Naive thymus-derived CD4-positive, alpha-beta T cell (primary cell): ENCODE measurements at regions of chr14 and their contacts with region 1.

Region 1: DNA sequence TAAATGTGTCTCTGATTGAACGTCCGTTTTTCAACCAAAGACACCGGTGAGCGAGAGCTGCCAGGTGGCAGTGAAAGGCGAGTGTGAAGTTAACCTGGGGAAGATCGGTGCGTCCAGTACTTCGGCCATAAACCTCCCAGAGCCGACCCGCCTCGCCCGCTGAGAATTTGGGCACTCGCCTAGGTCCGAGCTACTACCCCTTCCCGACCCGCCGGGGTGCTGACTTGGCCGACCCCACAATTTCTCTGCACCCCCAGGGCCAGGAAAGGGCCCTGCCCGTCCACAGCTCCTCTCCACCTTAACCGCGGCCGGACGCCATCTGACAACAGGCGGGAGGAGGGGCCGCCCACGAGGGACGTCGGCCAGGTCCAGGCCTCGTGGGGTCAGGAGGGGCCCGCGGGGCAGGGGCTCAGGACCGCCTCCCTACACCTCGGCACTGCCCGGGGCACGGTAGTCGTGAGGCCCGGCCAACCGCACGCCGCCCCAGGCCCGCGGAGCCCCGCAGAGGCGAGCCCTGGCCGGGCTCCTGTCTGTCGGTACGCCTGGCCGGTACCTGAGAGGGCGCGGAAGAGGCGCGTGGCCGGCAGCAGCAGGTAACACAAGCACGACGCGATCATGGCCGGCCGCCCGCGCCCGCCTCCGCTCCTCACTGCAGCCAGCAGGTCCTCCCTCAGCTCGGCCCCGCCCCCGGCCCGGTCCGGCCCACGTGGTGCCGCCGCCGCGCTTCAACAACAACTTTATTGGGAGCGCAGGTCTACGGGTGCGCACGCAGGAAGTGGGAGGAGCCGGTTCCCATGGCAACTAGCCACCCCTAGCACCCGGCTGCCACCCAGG is at the start of gene ANGEL1:
- DNase-seq: peak; percentile 93 to 98 (median 96)
- ATAC-seq: peak; percentile 98
- H3K4me3 ChIP-seq: peak within 1 kb of the TSS; percentile 63
- H3K4me3 Mint-ChIP-seq: peak within 1 kb of the TSS; percentile 88 to 99 (median 93)
- H3K27ac ChIP-seq: peak within 1 kb of the TSS; percentile 87
- H3K27ac Mint-ChIP-seq: peak within 1 kb of the TSS; percentile 85 to 96 (median 94)
- H3K4me1 ChIP-seq: peaks cover 20 to 21% of the 10 kb centered on the region in 2 donors
- H3K4me1 Mint-ChIP-seq: peaks cover 16 to 48% (median 37%) of the 10 kb centered on the region in 7 donors
- H3K27me3 ChIP-seq: no peaks in the 10 kb centered on the region
- H3K27me3 Mint-ChIP-seq: no peaks in the 10 kb centered on the region
- total RNA-seq, gene ANGEL1: 14.5 to 37.6 (median 19.9) TPM

Region 2: GRCh38 chr14:75982266-75983018 is 830.0 kb before region 1 on chr14:
- CTCF ChIA-PET with region 1: interaction called, 3 read pairs
- POLR2A ChIA-PET with region 1: no interaction called
- intact Hi-C with region 1: loop called in 1 of 2 experiments (anchors 2 kb)
- DNase-seq: peak; percentile 69 to 83 (median 80)
- ATAC-seq: peak; percentile 83
- H3K4me3 ChIP-seq: peak overlapping the region; percentile 83
- H3K4me3 Mint-ChIP-seq: peak overlapping the region; percentile 80 to 99 (median 88)
- H3K27ac ChIP-seq: peak overlapping the region; percentile 84
- H3K27ac Mint-ChIP-seq: peak overlapping the region; percentile 58 to 97 (median 90)
- H3K4me1 ChIP-seq: peaks cover 18 to 32% of the 10 kb centered on the region in 2 donors
- H3K4me1 Mint-ChIP-seq: peaks cover 43 to 64% (median 56%) of the 10 kb centered on the region in 7 donors
- H3K27me3 ChIP-seq: no peaks in the 10 kb centered on the region
- H3K27me3 Mint-ChIP-seq: peaks cover 0 to 24% (median 0%) of the 10 kb centered on the region in 5 donors

Region 3: GRCh38 chr14:76761136-76761959 is 51.1 kb before region 1 on chr14 and contains the start of gene VASH1:
- CTCF ChIA-PET with region 1: no interaction called
- POLR2A ChIA-PET with region 1: no interaction called
- intact Hi-C with region 1: loop called (anchors 2 kb)
- DNase-seq: peak in 7 of 9 donors; percentile 8 to 77 (median 25)
- ATAC-seq: peak; percentile 85
- H3K4me3 ChIP-seq: peak within 1 kb of the TSS; percentile 61
- H3K4me3 Mint-ChIP-seq: peak within 1 kb of the TSS; percentile 71 to 88 (median 82)
- H3K27ac ChIP-seq: no peak within 1 kb of the TSS
- H3K27ac Mint-ChIP-seq: peak within 1 kb of the TSS in 2 of 9 donors; percentile 44 to 91
- H3K4me1 ChIP-seq: peaks cover 0 to 5% of the 10 kb centered on the region in 2 donors
- H3K4me1 Mint-ChIP-seq: peaks cover 5 to 25% (median 10%) of the 10 kb centered on the region in 7 donors
- H3K27me3 ChIP-seq: peaks cover 0 to 5% of the 10 kb centered on the region in 2 donors
- H3K27me3 Mint-ChIP-seq: peaks cover 0 to 65% (median 26%) of the 10 kb centered on the region in 5 donors
- total RNA-seq, gene VASH1: 1.1 to 18.2 (median 5.6) TPM

Region 4: DNA sequence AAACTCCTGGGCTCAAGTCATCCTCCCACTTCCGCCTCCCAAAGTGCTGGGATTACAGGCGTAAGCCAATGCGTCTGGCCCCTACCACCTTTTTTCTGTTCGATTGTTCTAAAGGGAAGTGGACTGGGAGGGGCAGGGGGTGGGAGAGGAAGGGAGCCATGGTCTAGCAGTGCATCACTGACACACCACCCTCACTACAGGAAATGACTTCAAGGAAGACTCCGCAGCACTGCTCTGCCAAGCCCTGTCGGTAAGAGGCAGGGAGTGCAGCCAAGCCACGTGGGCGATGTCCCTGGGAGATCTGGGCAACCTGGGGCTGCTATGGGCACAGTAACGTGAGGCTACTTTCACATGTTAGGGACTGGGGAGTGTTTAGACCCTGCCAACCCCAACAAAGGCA is 31.8 kb after region 1 on chr14:
- CTCF ChIA-PET with region 1: no interaction called
- POLR2A ChIA-PET with region 1: no interaction called
- intact Hi-C with region 1: loop called in 1 of 2 experiments (anchors 1 kb)
- DNase-seq: peak in 8 of 9 donors; percentile 20 to 76 (median 68)
- ATAC-seq: peak; percentile 100
- H3K4me3 ChIP-seq: peak overlapping the region; percentile 31
- H3K4me3 Mint-ChIP-seq: peak overlapping the region; percentile 20 to 78 (median 62)
- H3K27ac ChIP-seq: no peak overlapping the region
- H3K27ac Mint-ChIP-seq: peak overlapping the region; percentile 65 to 92 (median 80)
- H3K4me1 ChIP-seq: peaks cover 8% of the 10 kb centered on the region in 2 donors
- H3K4me1 Mint-ChIP-seq: peaks cover 8 to 11% (median 10%) of the 10 kb centered on the region in 7 donors
- H3K27me3 ChIP-seq: no peaks in the 10 kb centered on the region
- H3K27me3 Mint-ChIP-seq: peaks cover 4 to 26% (median 11%) of the 10 kb centered on the region in 5 donors

Region 5: DNA sequence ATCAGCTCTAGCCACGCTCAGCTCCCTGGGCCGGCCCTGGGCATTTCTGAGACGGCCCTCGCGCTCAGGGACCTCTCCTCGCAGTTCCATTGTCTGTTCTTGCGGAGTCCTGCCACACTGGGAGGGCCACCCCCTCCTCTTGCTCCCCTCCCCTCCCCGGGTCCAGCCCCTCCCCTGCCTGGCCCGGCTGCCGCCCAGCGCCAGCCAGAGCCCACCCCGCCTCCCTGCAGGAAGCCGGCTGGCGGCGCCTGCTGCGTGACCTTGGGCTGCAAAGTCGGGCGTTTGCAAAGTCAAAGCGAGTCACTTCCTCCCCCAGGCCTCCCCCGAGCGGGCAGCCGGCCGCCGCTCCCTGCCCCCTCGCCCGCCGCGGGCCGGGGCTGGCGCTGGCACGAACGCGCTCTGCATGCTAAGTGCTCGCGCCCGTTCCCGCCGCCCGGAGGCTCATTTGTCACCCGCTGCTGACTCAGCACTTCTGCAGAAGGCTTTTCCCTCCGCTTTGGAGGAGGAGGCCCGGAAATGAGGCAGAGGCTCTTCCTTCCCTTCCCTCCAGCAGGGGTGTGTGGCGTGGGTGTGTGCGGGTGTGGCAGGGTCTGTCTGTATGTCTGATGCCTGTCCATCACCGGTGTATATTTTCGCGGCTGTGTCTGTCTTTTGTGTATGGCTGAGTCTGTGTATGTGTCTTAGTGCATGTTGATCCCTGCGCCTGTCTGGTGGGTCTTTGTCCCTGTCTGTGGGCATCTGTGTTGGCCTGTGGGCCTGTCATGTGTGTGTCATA is 144.1 kb after region 1 on chr14:
- CTCF ChIA-PET with region 1: no interaction called
- POLR2A ChIA-PET with region 1: no interaction called
- intact Hi-C with region 1: loop called in 1 of 2 experiments (anchors 2 kb)
- DNase-seq: peak; percentile 70 to 90 (median 78)
- ATAC-seq: peak; percentile 82
- H3K4me3 ChIP-seq: peak overlapping the region; percentile 74
- H3K4me3 Mint-ChIP-seq: peak overlapping the region; percentile 82 to 97 (median 93)
- H3K27ac ChIP-seq: peak overlapping the region; percentile 87
- H3K27ac Mint-ChIP-seq: peak overlapping the region; percentile 88 to 99 (median 98)
- H3K4me1 ChIP-seq: peaks cover 38 to 49% of the 10 kb centered on the region in 2 donors
- H3K4me1 Mint-ChIP-seq: peaks cover 24 to 77% (median 71%) of the 10 kb centered on the region in 7 donors
- H3K27me3 ChIP-seq: no peaks in the 10 kb centered on the region
- H3K27me3 Mint-ChIP-seq: no peaks in the 10 kb centered on the region

Region 6: GRCh38 chr14:77376771-77377501 is 564.5 kb after region 1 on chr14 and contains the starts of genes SAMD15 and TMED8:
- CTCF ChIA-PET with region 1: no interaction called
- POLR2A ChIA-PET with region 1: no interaction called
- intact Hi-C with region 1: loop called (anchors 1 to 2 kb)
- DNase-seq: peak; percentile 77 to 88 (median 83)
- ATAC-seq: peak; percentile 96
- H3K4me3 ChIP-seq: peak within 1 kb of the TSS; percentile 99
- H3K4me3 Mint-ChIP-seq: peak within 1 kb of the TSS in 7 of 10 donors; percentile 88 to 97 (median 93)
- H3K27ac ChIP-seq: peak within 1 kb of the TSS; percentile 87
- H3K27ac Mint-ChIP-seq: peak within 1 kb of the TSS; percentile 52 to 93 (median 77)
- H3K4me1 ChIP-seq: peaks cover 14 to 18% of the 10 kb centered on the region in 2 donors
- H3K4me1 Mint-ChIP-seq: peaks cover 17 to 41% (median 39%) of the 10 kb centered on the region in 7 donors
- H3K27me3 ChIP-seq: no peaks in the 10 kb centered on the region
- H3K27me3 Mint-ChIP-seq: peaks cover 0 to 10% (median 0%) of the 10 kb centered on the region in 5 donors
- total RNA-seq, gene SAMD15: 0.27 to 0.46 (median 0.42) TPM in 3 of 5 experiments, not detected in the others
- total RNA-seq, gene TMED8: 5.5 to 18.6 (median 7.0) TPM

Region 7: DNA sequence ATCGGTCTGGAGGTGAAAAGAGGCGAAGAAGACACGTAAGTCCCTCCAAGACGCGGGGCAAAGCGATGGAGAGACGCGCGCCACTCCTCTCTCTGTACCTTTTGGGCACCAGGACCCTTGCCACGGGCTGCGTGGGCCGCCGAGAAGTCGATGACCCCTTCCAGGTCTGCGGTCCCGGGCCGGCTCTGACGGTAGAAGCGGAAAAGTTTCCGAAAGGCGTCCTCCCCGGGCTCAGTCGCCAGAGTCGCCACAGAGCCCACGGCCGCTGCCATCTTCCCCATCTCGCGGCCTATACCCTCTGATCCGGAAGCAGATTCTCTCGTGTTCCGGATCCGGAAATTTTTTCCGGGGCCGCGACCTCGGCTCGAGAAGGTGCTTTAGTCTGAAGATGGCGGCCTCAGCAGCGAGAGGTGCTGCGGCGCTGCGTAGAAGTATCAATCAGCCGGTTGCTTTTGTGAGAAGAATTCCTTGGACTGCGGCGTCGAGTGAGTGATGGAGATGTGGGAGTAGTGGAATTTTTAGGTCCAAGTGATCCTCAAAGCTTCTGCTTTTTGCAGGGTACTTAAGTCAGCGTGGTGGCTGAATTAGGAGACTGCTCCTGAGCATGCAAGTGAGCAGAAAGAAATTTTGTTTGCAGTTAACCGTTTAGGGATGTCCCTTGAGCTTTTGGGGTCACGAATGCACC is 895.4 kb after region 1 on chr14 and contains the starts of genes ALKBH1 and SLIRP:
- CTCF ChIA-PET with region 1: no interaction called
- POLR2A ChIA-PET with region 1: no interaction called
- intact Hi-C with region 1: loop called in 1 of 2 experiments (anchors 2 kb)
- DNase-seq: peak; percentile 73 to 91 (median 87)
- ATAC-seq: peak; percentile 98
- H3K4me3 ChIP-seq: peak within 1 kb of the TSS; percentile 88
- H3K4me3 Mint-ChIP-seq: peak within 1 kb of the TSS; percentile 86 to 98 (median 94)
- H3K27ac ChIP-seq: peak within 1 kb of the TSS; percentile 79
- H3K27ac Mint-ChIP-seq: peak within 1 kb of the TSS; percentile 91 to 99 (median 94)
- H3K4me1 ChIP-seq: peaks cover 22 to 24% of the 10 kb centered on the region in 2 donors
- H3K4me1 Mint-ChIP-seq: peaks cover 26 to 58% (median 44%) of the 10 kb centered on the region in 7 donors
- H3K27me3 ChIP-seq: no peaks in the 10 kb centered on the region
- H3K27me3 Mint-ChIP-seq: no peaks in the 10 kb centered on the region
- total RNA-seq, gene ALKBH1: 10.2 to 20.3 (median 14.1) TPM
- total RNA-seq, gene SLIRP: 35.9 to 66.6 (median 45.5) TPM